Activated B cell treated with CpG ODN at 0.5 μM for 24 hours (primary cell): ENCODE measurements at regions of chr2 and their contacts with region 1.

Region 1: DNA sequence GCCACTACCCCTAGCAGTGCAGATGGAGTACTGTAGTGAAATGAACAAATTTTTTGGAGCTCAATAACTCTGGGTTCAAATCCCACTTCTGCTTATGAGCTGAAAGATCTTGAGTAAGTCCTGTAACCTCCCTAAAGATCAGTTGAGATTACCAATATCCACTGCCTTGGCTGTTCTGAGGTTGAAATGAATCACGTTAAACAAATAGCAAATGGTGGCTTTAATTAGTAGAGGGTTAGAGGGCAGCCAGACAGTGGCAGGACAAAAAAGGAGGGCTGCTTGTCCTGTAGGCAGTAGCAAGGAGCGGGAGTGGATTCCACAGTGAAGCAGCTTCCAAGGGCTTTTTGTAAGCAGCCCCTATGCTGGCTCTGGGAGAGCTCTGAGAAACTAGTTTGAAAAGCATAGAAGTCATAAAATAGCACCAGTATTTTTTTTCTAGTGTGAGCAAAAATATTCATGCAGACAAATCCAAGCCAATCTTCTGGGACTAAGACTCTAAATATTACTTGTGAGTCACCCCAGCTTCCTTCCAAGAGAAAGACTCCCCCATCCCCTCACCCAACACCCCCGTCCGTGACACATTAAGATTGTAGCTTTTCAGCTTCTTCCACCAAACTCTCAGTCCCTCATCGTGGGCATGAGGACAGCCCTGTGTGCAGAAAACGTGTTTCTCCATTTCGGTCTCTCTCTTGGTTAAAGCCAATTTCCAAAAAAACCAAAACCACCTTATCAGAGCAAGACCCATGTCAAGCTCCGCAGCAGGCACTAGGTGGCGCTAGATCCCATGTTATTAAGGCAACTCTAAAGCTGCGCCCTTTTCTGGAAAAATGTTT is 123.5 kb upstream of the LGALSL start:
- DNase-seq: peak; percentile 41
- ATAC-seq: no peak
- H3K4me3 Mint-ChIP-seq: peak overlapping the region; percentile 55
- H3K27ac Mint-ChIP-seq: peak overlapping the region; percentile 10
- H3K4me1 Mint-ChIP-seq: peaks cover 47% of the 10 kb centered on the region
- H3K27me3 Mint-ChIP-seq: no peaks in the 10 kb centered on the region
- CTCF ChIP-seq: peak; percentile 45

Region 2: GRCh38 chr2:63692002-63692606 is 638.4 kb before region 1 on chr2:
- CTCF ChIA-PET with region 1: interaction called, 6 read pairs
- POLR2A ChIA-PET with region 1: no interaction called
- intact Hi-C with region 1: loop called (anchors 1 kb)
- DNase-seq: no peak
- ATAC-seq: peak; percentile 18
- H3K4me3 Mint-ChIP-seq: no peak overlapping the region
- H3K27ac Mint-ChIP-seq: no peak overlapping the region
- H3K4me1 Mint-ChIP-seq: no peaks in the 10 kb centered on the region
- H3K27me3 Mint-ChIP-seq: no peaks in the 10 kb centered on the region
- CTCF ChIP-seq: peak; percentile 53

Region 3: DNA sequence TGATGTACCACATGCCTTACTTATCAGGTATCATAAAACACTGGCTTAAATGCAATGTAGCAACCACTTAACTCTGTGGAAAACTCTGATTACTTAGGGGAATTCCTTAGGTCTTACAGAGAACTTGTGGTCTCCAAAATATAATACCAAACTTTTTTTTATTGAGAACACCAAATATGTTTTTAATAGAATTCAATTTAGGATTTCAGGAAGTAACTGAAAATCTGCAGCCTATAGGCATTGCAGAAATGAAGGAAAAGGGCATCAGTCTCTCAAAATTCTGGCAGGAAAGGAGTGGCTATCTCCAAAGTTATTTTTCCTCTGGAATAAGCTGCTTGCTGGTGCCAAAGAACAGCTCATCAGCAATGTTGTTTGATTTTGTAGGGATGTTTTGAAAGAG is 594.1 kb before region 1 on chr2:
- CTCF ChIA-PET with region 1: no interaction called
- POLR2A ChIA-PET with region 1: no interaction called
- intact Hi-C with region 1: no loop called
- DNase-seq: no peak
- ATAC-seq: no peak
- H3K4me3 Mint-ChIP-seq: no peak overlapping the region
- H3K27ac Mint-ChIP-seq: no peak overlapping the region
- H3K4me1 Mint-ChIP-seq: no peaks in the 10 kb centered on the region
- H3K27me3 Mint-ChIP-seq: no peaks in the 10 kb centered on the region
- CTCF ChIP-seq: no peak

Region 4: GRCh38 chr2:64045938-64046337 is 284.6 kb before region 1 on chr2:
- CTCF ChIA-PET with region 1: interaction called, 321 read pairs
- POLR2A ChIA-PET with region 1: interaction called, 115 read pairs
- intact Hi-C with region 1: loop called (anchors 1 kb)
- DNase-seq: no peak
- ATAC-seq: no peak
- H3K4me3 Mint-ChIP-seq: no peak overlapping the region
- H3K27ac Mint-ChIP-seq: no peak overlapping the region
- H3K4me1 Mint-ChIP-seq: peaks cover 8% of the 10 kb centered on the region
- H3K27me3 Mint-ChIP-seq: no peaks in the 10 kb centered on the region
- CTCF ChIP-seq: no peak

Region 5: GRCh38 chr2:64144057-64145013 is 186.2 kb before region 1 on chr2 and contains the start of gene PELI1:
- CTCF ChIA-PET with region 1: interaction called, 9 read pairs
- POLR2A ChIA-PET with region 1: interaction called, 46 read pairs
- intact Hi-C with region 1: loop called (anchors 1 kb)
- DNase-seq: peak; percentile 83
- ATAC-seq: peak; percentile 95
- H3K4me3 Mint-ChIP-seq: peak within 1 kb of the TSS; percentile 96
- H3K27ac Mint-ChIP-seq: peak within 1 kb of the TSS; percentile 95
- H3K4me1 Mint-ChIP-seq: peaks cover 37% of the 10 kb centered on the region
- H3K27me3 Mint-ChIP-seq: no peaks in the 10 kb centered on the region
- CTCF ChIP-seq: no peak
- total RNA-seq, gene PELI1: 81.4 and 93.1 TPM in 2 replicates

Region 6: DNA sequence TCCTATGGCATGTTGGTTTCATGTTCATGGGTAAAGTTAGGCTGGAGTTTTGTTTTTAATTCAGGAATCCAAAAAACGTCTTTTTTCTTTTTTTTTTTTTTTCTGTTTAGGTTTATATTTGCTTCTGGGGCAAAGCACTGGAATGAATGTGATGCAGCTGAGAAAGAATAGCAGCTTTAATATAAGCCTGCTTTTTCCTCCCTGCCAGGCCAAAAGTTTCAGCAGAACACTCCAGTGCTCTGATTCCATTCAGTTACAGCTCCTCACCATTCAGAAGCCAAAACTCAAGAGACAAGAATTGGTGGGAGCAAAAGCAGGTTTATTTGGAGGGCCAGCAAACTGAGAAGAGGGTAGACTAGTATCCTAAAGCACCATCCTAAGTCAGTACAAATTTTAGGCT is 83.5 kb before region 1 on chr2:
- CTCF ChIA-PET with region 1: no interaction called
- POLR2A ChIA-PET with region 1: no interaction called
- intact Hi-C with region 1: no loop called
- DNase-seq: no peak
- ATAC-seq: no peak
- H3K4me3 Mint-ChIP-seq: no peak overlapping the region
- H3K27ac Mint-ChIP-seq: no peak overlapping the region
- H3K4me1 Mint-ChIP-seq: no peaks in the 10 kb centered on the region
- H3K27me3 Mint-ChIP-seq: no peaks in the 10 kb centered on the region
- CTCF ChIP-seq: no peak

Region 7: DNA sequence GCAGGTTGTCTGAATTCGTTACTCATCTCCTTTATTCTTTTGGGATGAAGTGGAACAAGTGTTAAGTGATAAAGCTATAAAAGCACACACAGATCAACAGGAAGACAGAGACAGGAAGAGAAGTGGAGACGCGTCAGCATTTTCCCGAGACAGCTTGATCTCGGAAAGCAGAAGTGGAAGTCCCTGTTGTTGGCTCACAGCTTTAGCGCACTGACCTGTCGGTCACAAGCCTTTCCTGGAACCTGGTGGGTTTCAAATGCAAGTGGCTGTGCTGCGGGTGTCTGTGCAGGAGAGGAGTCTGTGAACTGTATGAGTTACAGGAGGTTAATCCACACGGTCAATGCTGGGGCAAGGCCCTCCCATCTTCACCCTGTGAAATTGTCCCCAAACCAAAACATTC is 69.7 kb before region 1 on chr2:
- CTCF ChIA-PET with region 1: interaction called, 8 read pairs
- POLR2A ChIA-PET with region 1: interaction called, 17 read pairs
- intact Hi-C with region 1: loop called (anchors 1 kb)
- DNase-seq: peak; percentile 46
- ATAC-seq: peak; percentile 92
- H3K4me3 Mint-ChIP-seq: peak overlapping the region; percentile 70
- H3K27ac Mint-ChIP-seq: peak overlapping the region; percentile 92
- H3K4me1 Mint-ChIP-seq: peaks cover 41% of the 10 kb centered on the region
- H3K27me3 Mint-ChIP-seq: no peaks in the 10 kb centered on the region
- CTCF ChIP-seq: no peak

Region 8: DNA sequence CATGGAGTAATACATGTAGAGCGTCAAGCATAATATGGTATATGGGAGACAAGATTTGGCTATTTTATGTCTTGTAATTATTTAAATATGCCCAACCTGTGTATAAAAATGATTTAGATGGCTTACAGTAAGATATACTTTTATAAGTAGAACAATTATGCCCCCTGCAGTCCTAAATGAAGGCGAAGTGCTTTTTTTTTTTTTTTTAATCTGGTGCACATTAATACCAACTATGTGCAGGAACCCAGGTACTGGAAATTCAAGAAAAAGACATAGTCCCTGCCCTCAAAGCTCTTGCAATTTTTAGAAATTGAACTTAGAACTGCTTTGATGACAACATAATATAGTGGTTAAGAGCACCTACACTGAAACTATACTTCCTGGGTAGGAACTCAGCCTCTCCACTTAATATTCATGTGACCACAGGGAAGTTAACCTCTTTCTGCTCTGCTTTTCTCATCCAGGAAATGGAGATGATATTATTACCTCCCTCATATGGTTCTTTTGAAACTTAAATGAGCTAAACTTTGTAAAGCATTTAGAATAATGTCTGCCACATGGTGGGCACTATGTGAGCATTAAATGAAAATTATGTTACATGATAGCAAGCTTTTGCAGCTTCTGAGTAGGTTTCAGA is 231.8 kb after region 1 on chr2:
- CTCF ChIA-PET with region 1: interaction called, 78 read pairs
- POLR2A ChIA-PET with region 1: no interaction called
- intact Hi-C with region 1: loop called (anchors 1 kb)
- DNase-seq: no peak
- ATAC-seq: peak; percentile 52
- H3K4me3 Mint-ChIP-seq: no peak overlapping the region
- H3K27ac Mint-ChIP-seq: no peak overlapping the region
- H3K4me1 Mint-ChIP-seq: peaks cover 34% of the 10 kb centered on the region
- H3K27me3 Mint-ChIP-seq: no peaks in the 10 kb centered on the region
- CTCF ChIP-seq: no peak

Region 9: DNA sequence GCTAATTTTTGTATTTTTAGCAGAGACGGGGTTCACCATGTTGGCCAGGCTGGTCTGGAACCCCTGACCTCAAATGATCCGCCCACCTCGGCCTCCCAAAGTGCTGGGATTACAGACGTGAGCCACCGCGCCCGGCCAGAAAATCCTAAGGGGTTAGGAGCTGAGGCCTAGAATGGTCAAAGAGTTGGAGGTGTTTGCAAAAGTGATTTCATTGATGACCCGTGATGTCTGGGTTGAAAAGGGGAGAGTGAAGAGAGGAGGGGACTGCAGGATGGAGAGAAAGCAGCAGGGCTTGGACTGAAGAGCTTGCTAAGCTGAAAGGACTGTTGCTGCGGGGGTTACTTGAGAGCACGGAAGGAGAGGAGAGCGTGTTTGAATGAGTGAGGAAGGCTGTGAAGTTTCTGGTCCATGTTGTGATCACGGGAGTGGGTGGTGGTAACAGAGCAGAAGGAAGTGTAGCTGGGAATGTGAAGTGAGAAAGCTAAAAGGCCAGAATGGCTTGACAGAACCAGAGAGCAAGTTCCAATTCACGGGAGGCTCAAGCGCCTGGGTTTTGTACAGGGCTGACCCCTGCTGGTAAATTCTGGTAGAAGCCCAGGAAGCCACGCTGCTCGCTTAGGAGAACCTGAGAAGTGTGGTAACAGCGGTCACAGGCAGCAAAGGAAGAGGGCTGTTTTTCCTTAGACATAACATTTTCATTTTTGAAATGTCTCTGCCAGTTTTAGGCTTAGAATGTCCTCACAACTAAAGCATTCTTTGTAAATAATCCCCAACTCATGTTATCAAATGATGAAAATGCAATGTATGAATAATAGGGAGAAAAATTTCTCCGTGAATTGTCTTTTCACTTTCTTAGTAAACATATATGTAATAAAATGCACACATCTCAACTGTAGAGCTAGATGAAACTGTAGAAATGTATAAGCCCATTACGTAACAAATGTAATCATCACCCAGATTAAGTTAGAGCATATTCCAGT is 856.7 kb after region 1 on chr2:
- CTCF ChIA-PET with region 1: interaction called, 4 read pairs
- POLR2A ChIA-PET with region 1: no interaction called
- intact Hi-C with region 1: loop called (anchors 1 kb)
- DNase-seq: peak; percentile 38
- ATAC-seq: peak; percentile 91
- H3K4me3 Mint-ChIP-seq: no peak overlapping the region
- H3K27ac Mint-ChIP-seq: no peak overlapping the region
- H3K4me1 Mint-ChIP-seq: peaks cover 4% of the 10 kb centered on the region
- H3K27me3 Mint-ChIP-seq: peaks cover 11% of the 10 kb centered on the region
- CTCF ChIP-seq: no peak

Region 10: DNA sequence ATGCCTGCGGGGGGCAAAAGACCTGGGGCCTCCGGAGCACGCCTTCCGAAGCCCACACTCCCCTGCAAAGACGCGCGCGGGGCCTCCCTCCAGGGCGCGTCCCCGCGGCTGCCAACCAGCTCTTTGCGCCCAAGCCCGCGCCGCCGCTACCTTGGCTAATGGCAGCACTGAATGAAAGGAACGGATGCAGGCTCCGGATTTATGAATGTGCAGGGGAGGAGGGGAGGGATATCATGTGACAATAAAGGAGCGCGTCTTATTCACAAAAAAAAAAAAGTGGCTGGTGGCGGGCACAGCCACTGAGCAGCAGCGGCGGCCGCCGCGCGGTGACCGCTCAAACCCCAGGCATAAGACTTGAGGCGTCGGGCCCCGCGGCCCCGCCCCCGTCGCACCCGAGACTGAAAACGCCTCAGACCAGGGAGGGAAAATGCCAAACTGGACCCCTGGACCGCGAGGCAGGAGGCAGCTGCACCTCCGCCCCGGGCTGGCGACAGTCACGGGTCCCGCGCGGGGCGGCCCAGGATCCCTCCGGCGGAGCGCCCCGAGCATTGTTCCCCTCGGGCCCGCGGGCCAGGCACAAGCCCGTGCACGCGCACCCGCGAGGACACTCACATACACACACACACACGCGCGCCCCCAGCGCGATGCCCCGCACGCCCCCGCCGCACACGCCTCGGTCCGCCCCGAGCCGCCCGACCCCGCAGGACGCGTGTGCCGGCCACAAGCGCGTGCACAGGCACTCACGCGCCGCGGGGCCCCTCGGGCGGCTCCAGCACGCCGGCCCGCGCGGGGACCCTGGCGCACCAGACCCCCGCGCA is 1100.3 kb after region 1 on chr2:
- CTCF ChIA-PET with region 1: no interaction called
- POLR2A ChIA-PET with region 1: no interaction called
- intact Hi-C with region 1: no loop called
- DNase-seq: peak; percentile 65
- ATAC-seq: peak; percentile 49
- H3K4me3 Mint-ChIP-seq: peak overlapping the region; percentile 90
- H3K27ac Mint-ChIP-seq: peak overlapping the region; percentile 30
- H3K4me1 Mint-ChIP-seq: peaks cover 12% of the 10 kb centered on the region
- H3K27me3 Mint-ChIP-seq: peaks cover 13% of the 10 kb centered on the region
- CTCF ChIP-seq: no peak